ENCODE measurements at regions of chr10 and their contacts with region 1.

Region 1: DNA sequence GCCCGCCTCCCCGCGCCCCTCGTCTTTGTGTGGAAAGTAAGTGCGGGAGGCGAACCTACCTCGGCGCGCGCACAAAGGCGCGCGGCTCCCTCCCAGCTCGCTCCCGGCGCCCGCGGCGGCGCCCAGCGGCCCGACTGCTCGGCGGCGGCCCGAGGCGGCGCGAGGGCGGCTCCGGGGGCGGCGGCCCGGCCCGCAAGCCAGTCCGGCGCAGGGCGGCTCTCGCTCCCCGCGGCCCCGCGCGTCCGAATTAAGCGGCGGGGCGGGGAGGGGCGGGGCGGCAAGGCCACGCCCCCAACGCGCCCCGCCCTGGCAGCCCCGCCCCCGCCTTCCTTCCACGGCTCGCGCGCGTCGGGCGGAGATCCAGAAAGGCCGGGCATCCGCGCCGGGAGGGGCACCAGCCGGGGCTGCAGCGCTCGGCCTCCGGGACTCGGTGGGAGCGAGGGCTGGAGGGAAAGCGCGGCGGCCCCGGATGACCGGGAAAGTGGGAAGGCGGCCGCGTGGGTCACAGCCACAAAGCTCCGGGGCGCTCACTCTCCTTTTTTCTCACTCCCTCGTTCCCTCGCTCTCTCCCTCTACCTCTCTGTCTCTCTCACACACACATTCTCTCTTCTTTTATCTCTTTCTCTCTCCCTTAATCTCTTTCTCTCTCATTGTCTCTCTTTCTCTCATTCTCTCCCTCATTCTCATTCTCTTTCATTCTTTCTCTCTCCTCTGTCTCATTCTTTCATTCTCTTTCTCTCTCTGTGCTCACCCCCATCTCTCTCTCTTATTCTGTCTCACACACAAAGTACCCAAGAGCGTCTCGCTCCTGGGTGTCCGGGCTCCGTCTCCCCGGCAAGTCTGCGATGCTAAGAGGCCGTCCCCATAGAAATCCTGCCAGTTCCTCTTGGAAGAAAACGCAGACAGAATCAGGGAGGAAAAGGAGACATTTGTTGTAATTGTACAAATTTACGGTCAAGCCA is 170.2 kb downstream of the FAM107B start:
- DNase-seq: peak; percentile 68 to 89 (median 78)
- H3K4me3 ChIP-seq: peak overlapping the region; percentile 55 to 84 (median 73)
- H3K27ac ChIP-seq: peak overlapping the region in 52 of 59 donors; percentile 10 to 88 (median 73)
- H3K27me3 ChIP-seq: no peaks in the 10 kb centered on the region
- CTCF ChIP-seq: peak in 14 of 56 donors; percentile 4 to 37 (median 19)

Region 2: GRCh38 chr10:14556285-14556956 is 48.0 kb before region 1 on chr10:
- intact Hi-C with region 1: loop called in 1 of 2 experiments (anchors 10 kb)
- DNase-seq: no peak
- H3K4me3 ChIP-seq: peak overlapping the region in 5 of 59 donors; percentile 0 to 8 (median 3)
- H3K27ac ChIP-seq: peak overlapping the region in 51 of 59 donors; percentile 6 to 100 (median 78)
- H3K27me3 ChIP-seq: no peaks in the 10 kb centered on the region
- CTCF ChIP-seq: peak in 46 of 56 donors; percentile 8 to 66 (median 38)

Region 3: GRCh38 chr10:14571866-14572507 is 32.5 kb before region 1 on chr10:
- intact Hi-C with region 1: loop called (anchors 2 to 5 kb)
- DNase-seq: peak in 6 of 10 donors; percentile 61 to 82 (median 70)
- H3K4me3 ChIP-seq: peak overlapping the region; percentile 16 to 72 (median 53)
- H3K27ac ChIP-seq: peak overlapping the region; percentile 77 to 100 (median 98)
- H3K27me3 ChIP-seq: no peaks in the 10 kb centered on the region
- CTCF ChIP-seq: peak in 3 of 56 donors; percentile 13 to 24 (median 24)

Region 4: DNA sequence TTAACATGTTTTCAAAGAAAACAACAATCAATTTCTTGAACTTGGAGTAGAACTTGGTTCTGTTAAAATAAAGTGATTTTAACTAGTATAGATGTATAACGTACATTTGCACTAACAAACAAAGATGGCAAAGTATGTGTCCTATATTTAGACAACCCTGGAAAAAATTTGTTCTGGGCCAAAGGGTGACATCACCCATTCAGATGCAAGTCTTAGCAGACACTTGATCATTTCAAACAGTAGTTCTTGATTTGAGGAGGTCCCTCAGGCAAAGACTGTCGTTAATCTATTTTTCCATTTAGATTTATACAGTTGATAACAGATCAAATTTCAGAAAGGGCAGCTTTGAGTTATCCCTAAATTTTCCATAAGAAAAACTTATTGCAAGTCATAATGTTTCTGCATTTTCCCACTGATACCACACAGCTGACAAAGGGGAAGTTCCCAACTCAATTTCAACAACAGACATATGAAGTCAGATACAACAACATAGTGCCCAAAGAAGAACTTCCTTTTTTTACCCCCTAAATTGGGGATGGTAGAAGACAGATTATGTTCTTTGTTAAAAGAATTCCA is 558.9 kb after region 1 on chr10:
- intact Hi-C with region 1: no loop called
- DNase-seq: no peak
- H3K4me3 ChIP-seq: no peak overlapping the region
- H3K27ac ChIP-seq: no peak overlapping the region
- H3K27me3 ChIP-seq: no peaks in the 10 kb centered on the region
- CTCF ChIP-seq: no peak